Activated CD4-positive, alpha-beta memory T cell treated with anti-CD3 and anti-CD28 coated beads for 36 hours (primary cell): ENCODE measurements at regions of chr17 and their contacts with region 1.

Region 1: DNA sequence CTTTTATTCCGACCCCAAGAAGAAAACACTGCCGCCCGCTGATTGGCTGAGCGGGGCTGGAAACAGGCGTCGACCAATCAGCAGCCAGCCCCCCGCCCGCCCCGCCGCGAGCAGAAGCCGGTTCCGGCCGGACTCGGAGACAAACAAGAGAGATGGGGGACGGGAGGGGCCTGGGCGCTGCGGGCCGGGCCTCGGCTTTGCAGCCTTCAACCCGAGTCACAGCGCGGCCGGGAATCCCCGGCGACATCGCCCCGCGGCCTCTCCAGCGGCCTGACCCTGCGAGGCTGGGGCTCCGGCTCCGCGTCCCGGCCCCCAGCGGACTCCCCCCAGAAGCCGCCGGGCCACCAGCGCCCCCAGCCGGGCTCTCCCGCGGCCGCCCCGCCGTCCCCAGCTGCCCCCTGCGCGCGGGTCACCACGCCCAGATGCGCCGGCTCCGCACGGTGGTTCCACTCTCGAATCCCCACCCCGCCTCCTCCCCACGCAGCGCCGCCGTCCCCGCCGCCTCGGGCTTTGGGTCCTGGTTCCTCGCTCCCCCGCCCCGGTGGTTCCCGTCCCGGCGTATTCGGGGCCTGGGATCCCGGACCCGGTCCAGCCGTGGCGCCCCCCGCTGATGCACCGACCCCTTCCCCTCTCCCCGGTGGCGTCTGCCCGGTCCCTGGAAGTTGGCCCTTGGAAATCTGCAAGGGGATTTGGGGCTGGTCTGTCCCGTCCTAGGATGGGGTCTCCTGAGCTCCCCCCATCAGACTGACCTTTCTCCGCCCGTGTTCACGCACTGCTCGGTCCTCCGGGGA is 417 bp upstream of the SLC43A2 start:
- DNase-seq: peak; percentile 93
- H3K4me3 Mint-ChIP-seq: peak overlapping the region; percentile 87
- H3K27ac Mint-ChIP-seq: peak overlapping the region; percentile 67
- H3K4me1 Mint-ChIP-seq: peaks cover 11% of the 10 kb centered on the region
- H3K27me3 Mint-ChIP-seq: peaks cover 16% of the 10 kb centered on the region

Region 2: DNA sequence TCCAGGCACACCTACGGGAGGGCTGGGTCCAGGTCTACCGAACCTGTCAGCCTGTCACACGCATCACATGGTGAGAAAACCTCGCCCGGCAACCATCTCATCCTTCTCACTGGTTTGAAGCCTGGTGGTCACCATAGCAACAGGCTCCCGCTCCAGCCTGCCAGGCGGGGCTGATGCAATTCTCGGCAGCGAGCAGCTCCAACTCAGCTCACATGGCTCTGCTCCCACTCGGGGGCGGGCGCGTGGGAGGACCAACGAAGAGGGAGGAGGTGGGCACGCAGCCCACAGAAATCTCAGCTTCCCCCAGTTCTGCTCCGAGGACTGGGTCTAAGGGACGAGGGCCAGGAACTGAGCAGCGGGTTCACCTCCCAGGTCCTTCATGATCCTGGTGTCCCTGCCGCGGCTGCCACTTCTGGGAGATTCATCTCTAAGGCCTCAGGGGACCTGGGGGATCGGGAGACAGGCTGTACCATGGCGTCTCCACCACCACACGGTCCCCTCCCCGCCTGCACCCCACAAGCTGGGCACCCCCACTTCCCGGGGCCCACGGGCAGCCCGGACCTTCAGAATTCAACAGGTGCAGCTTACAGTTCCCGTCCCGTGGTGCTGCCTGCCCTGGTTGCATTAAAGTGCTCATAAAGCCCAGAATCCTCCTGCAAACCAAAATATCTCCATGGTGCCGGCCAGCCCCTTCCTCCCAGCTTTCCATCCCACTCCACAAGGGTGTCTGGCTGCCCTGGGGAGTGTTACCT is 475.1 kb before region 1 on chr17:
- CTCF ChIA-PET with region 1: no interaction called
- POLR2A ChIA-PET with region 1: no interaction called
- intact Hi-C with region 1: no loop called
- DNase-seq: no peak
- H3K4me3 Mint-ChIP-seq: no peak overlapping the region
- H3K27ac Mint-ChIP-seq: no peak overlapping the region
- H3K4me1 Mint-ChIP-seq: no peaks in the 10 kb centered on the region
- H3K27me3 Mint-ChIP-seq: no peaks in the 10 kb centered on the region

Region 3: GRCh38 chr17:1561400-1562175 is 67.5 kb before region 1 on chr17:
- CTCF ChIA-PET with region 1: interaction called, 16 read pairs
- POLR2A ChIA-PET with region 1: interaction called, 3 read pairs
- intact Hi-C with region 1: loop called (anchors 2 kb)
- DNase-seq: peak; percentile 53
- H3K4me3 Mint-ChIP-seq: peak overlapping the region; percentile 82
- H3K27ac Mint-ChIP-seq: peak overlapping the region; percentile 49
- H3K4me1 Mint-ChIP-seq: peaks cover 38% of the 10 kb centered on the region
- H3K27me3 Mint-ChIP-seq: no peaks in the 10 kb centered on the region

Region 4: GRCh38 chr17:1573916-1574696 is 54.9 kb before region 1 on chr17:
- CTCF ChIA-PET with region 1: interaction called, 209 read pairs
- POLR2A ChIA-PET with region 1: interaction called, 14 read pairs
- intact Hi-C with region 1: loop called (anchors 1 kb)
- DNase-seq: peak; percentile 82
- H3K4me3 Mint-ChIP-seq: no peak overlapping the region
- H3K27ac Mint-ChIP-seq: no peak overlapping the region
- H3K4me1 Mint-ChIP-seq: no peaks in the 10 kb centered on the region
- H3K27me3 Mint-ChIP-seq: no peaks in the 10 kb centered on the region

Region 5: DNA sequence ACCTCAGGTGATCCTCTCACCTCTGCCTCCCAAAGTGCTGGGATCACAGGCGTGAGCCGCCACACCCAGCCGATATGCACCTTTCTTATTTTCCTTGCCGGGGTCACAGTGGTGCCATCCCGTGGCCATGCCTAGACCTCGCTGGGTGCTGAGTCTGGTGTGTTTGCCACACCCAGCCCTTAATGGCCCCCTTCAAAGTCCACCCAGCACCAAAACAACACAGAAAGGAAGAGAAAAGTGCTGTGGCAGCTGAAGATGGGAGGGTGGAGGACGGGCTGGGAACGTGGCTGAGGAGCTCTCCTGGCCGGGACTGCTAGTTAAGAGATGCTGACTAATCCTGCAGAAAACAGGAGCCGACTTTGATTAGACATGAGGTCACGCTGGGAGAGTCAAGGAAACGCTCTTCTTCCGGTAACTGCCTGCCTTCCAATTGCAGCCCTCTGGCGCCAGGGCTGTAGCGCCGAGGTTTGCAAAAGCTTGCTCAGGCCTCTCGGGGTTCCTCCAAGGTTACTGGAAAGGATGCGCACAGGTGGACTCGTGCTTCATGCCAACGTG is 11.4 kb before region 1 on chr17:
- CTCF ChIA-PET with region 1: interaction called, 13 read pairs
- POLR2A ChIA-PET with region 1: no interaction called
- intact Hi-C with region 1: no loop called
- DNase-seq: no peak
- H3K4me3 Mint-ChIP-seq: no peak overlapping the region
- H3K27ac Mint-ChIP-seq: no peak overlapping the region
- H3K4me1 Mint-ChIP-seq: no peaks in the 10 kb centered on the region
- H3K27me3 Mint-ChIP-seq: no peaks in the 10 kb centered on the region

Region 6: DNA sequence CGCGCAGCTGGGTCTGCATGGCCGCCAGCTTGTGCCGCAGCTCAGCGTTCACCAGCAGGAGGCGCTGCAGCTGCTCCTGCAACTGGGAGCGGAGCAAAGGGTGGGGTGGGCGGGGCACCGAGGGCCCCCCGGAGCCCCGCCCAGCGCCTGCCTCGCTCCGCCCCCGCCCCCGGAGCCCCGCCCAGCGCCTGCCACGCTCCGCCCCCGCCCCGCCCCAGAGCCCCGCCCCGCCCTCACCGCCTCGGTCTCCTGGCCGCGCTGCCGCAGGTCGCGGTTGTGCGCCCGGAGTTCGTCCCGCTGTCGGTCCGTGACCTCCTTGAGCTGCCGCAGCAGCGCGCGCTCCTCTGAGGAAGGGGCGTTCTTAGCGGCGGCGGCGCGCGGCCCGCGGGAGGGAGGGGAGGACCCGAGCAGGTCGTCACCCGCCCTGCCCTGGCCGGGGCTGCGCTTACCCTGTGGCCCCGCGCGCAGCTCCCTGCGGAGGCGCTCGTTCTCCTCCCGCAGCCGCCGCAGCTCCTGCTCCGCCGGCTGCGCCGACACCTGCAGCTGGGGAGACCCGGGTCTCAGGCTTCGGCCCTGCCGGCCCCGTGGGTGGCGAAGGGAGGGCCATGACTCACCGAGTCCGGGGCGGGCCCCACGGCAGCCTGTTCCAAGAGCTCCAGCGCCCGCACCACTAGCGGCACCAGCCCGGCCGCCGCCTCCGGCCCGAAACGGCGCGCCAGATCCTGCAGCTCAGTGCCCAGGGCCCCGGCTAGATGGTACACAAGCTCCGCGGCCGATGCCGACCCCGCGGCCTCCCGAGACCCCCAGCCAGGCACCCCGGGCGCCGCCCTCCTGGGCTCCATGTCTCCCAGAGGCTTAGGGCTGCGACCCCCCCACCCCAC is 20.2 kb after region 1 on chr17:
- CTCF ChIA-PET with region 1: interaction called, 22 read pairs
- POLR2A ChIA-PET with region 1: interaction called, 4 read pairs
- intact Hi-C with region 1: no loop called
- DNase-seq: peak; percentile 95
- H3K4me3 Mint-ChIP-seq: peak overlapping the region; percentile 54
- H3K27ac Mint-ChIP-seq: no peak overlapping the region
- H3K4me1 Mint-ChIP-seq: peaks cover 26% of the 10 kb centered on the region
- H3K27me3 Mint-ChIP-seq: no peaks in the 10 kb centered on the region

Region 7: DNA sequence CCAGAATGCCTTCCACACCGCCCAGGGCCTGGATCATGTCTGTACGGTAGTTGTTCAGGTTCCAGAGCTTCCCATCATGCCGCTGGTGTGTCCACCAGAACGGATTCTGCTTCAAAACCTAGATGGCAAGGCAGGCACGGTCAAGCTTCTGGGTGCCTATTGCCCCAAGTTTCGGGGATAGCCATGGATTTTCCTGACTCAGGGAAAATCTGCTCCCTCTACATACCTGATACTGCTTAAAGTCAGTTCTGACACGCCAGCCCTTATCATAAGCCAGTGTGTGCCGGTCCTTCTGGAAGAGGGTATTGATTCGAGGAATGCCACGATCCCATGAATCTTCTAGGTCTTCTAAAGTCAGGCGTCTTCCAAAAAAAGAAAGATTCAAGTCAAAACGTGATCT is 32.0 kb after region 1 on chr17:
- CTCF ChIA-PET with region 1: no interaction called
- POLR2A ChIA-PET with region 1: no interaction called
- intact Hi-C with region 1: no loop called
- DNase-seq: no peak
- H3K4me3 Mint-ChIP-seq: no peak overlapping the region
- H3K27ac Mint-ChIP-seq: no peak overlapping the region
- H3K4me1 Mint-ChIP-seq: peaks cover 3% of the 10 kb centered on the region
- H3K27me3 Mint-ChIP-seq: no peaks in the 10 kb centered on the region

Region 8: GRCh38 chr17:2421315-2422147 is 792.5 kb after region 1 on chr17:
- CTCF ChIA-PET with region 1: no interaction called
- POLR2A ChIA-PET with region 1: no interaction called
- intact Hi-C with region 1: no loop called
- DNase-seq: no peak
- H3K4me3 Mint-ChIP-seq: no peak overlapping the region
- H3K27ac Mint-ChIP-seq: peak overlapping the region; percentile 30
- H3K4me1 Mint-ChIP-seq: peaks cover 3% of the 10 kb centered on the region
- H3K27me3 Mint-ChIP-seq: no peaks in the 10 kb centered on the region